ENCODE measurements at regions of chr1 and their contacts with region 1.

Region 1: DNA sequence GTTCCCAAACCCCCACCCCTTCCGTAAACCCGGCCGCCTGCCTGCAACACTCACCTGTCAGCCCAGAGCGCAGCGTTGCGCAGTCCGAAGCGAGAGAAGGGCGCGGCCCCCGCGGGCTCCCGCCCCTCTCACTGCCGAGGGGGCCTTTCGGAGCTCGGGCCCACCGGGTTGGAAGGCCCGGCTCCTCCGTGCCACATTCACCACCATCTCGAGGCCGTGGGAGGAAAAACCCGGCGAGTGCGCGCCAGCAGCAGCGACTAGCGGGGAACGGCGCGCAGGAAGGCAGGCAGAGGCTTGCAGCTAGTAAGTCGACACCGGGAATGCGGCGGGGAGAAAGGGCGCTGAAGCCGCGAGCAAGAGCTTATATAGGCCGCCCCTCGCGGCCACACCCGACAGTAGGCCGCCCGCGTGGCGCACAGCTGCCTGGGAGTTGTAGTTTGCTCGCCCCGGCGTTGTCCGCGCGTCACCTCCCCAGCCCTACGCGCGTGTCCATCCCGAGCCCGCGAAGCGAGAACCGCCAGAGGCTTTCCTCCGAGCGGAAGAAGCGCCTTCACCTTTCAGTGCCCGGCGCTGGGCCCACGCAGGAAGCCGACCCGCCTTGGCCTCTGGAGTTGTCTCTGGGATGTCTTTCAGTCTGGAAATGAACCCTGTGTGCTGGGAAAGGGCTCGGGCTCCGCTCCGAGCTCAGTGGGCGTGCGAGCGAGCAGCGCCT is 10.4 kb upstream of the RAB42 start:
- DNase-seq: peak; percentile 87 to 96 (median 91)
- ATAC-seq: peak; percentile 82
- H3K4me3 ChIP-seq: peak overlapping the region; percentile 88 to 91
- H3K4me3 Mint-ChIP-seq: peak overlapping the region; percentile 99
- H3K27ac ChIP-seq: peak overlapping the region; percentile 83 to 88
- H3K27ac Mint-ChIP-seq: peak overlapping the region; percentile 97
- H3K4me1 ChIP-seq: peaks cover 24% of the 10 kb centered on the region
- H3K4me1 Mint-ChIP-seq: peaks cover 37% of the 10 kb centered on the region
- H3K27me3 ChIP-seq: no peaks in the 10 kb centered on the region
- H3K27me3 Mint-ChIP-seq: no peaks in the 10 kb centered on the region
- CTCF ChIP-seq: no peak

Region 2: GRCh38 chr1:27872059-27872801 is 709.5 kb before region 1 on chr1 and contains the start of gene THEMIS2:
- CTCF ChIA-PET with region 1: no interaction called
- POLR2A ChIA-PET with region 1: no interaction called
- intact Hi-C with region 1: no loop called
- DNase-seq: peak; percentile 58 to 86 (median 81)
- ATAC-seq: peak; percentile 83
- H3K4me3 ChIP-seq: peak within 1 kb of the TSS; percentile 83 to 100
- H3K4me3 Mint-ChIP-seq: peak within 1 kb of the TSS; percentile 98
- H3K27ac ChIP-seq: peak within 1 kb of the TSS; percentile 47 to 61
- H3K27ac Mint-ChIP-seq: peak within 1 kb of the TSS; percentile 89
- H3K4me1 ChIP-seq: peaks cover 46% of the 10 kb centered on the region
- H3K4me1 Mint-ChIP-seq: peaks cover 49% of the 10 kb centered on the region
- H3K27me3 ChIP-seq: no peaks in the 10 kb centered on the region
- H3K27me3 Mint-ChIP-seq: no peaks in the 10 kb centered on the region
- CTCF ChIP-seq: no peak
- total RNA-seq, gene THEMIS2: 13.4 to 15.2 TPM

Region 3: GRCh38 chr1:28248283-28249012 is 333.2 kb before region 1 on chr1:
- CTCF ChIA-PET with region 1: interaction called, 5 read pairs
- POLR2A ChIA-PET with region 1: interaction called, 14 read pairs
- intact Hi-C with region 1: loop called (anchors 5 kb)
- DNase-seq: peak; percentile 72 to 89 (median 84)
- ATAC-seq: peak; percentile 18
- H3K4me3 ChIP-seq: peak overlapping the region in 1 of 2 experiments; percentile 28
- H3K4me3 Mint-ChIP-seq: peak overlapping the region; percentile 61
- H3K27ac ChIP-seq: peak overlapping the region; percentile 65 to 94
- H3K27ac Mint-ChIP-seq: peak overlapping the region; percentile 96
- H3K4me1 ChIP-seq: peaks cover 40% of the 10 kb centered on the region
- H3K4me1 Mint-ChIP-seq: peaks cover 44% of the 10 kb centered on the region
- H3K27me3 ChIP-seq: no peaks in the 10 kb centered on the region
- H3K27me3 Mint-ChIP-seq: no peaks in the 10 kb centered on the region
- CTCF ChIP-seq: peak; percentile 90

Region 4: DNA sequence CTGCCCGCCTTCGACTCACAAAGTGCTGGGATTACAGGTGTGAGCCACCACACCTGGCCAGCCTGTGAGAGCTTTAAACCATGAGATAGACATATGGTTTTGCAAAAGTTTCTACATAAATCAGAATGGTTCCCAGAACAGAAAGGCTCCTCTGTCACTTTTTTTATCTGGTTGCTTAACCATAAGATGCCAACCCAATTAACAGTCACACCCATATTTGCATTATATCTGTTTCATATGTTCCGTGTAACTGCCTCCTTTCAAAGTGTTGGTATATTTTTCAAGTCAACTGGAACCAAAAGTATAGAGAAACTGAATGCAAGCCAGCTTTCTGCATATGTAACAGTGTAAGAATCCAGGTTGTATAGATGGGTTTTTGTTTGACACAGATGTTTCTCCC is 99.6 kb before region 1 on chr1:
- CTCF ChIA-PET with region 1: no interaction called
- POLR2A ChIA-PET with region 1: no interaction called
- intact Hi-C with region 1: no loop called
- DNase-seq: no peak
- ATAC-seq: no peak
- H3K4me3 ChIP-seq: no peak overlapping the region
- H3K4me3 Mint-ChIP-seq: no peak overlapping the region
- H3K27ac ChIP-seq: no peak overlapping the region
- H3K27ac Mint-ChIP-seq: no peak overlapping the region
- H3K4me1 ChIP-seq: no peaks in the 10 kb centered on the region
- H3K4me1 Mint-ChIP-seq: no peaks in the 10 kb centered on the region
- H3K27me3 ChIP-seq: no peaks in the 10 kb centered on the region
- H3K27me3 Mint-ChIP-seq: no peaks in the 10 kb centered on the region
- CTCF ChIP-seq: no peak

Region 5: GRCh38 chr1:28505406-28506187 is 76.1 kb before region 1 on chr1 and contains the start of gene RCC1:
- CTCF ChIA-PET with region 1: interaction called, 4 read pairs
- POLR2A ChIA-PET with region 1: interaction called, 38 read pairs
- intact Hi-C with region 1: loop called (anchors 1 kb)
- DNase-seq: peak; percentile 89 to 99 (median 94)
- ATAC-seq: peak; percentile 91
- H3K4me3 ChIP-seq: peak within 1 kb of the TSS; percentile 82 to 88
- H3K4me3 Mint-ChIP-seq: peak within 1 kb of the TSS; percentile 95
- H3K27ac ChIP-seq: peak within 1 kb of the TSS; percentile 77 to 85
- H3K27ac Mint-ChIP-seq: peak within 1 kb of the TSS; percentile 94
- H3K4me1 ChIP-seq: peaks cover 31% of the 10 kb centered on the region
- H3K4me1 Mint-ChIP-seq: peaks cover 45% of the 10 kb centered on the region
- H3K27me3 ChIP-seq: no peaks in the 10 kb centered on the region
- H3K27me3 Mint-ChIP-seq: no peaks in the 10 kb centered on the region
- CTCF ChIP-seq: no peak
- total RNA-seq, gene RCC1: 12.5 to 14.4 TPM

Region 6: DNA sequence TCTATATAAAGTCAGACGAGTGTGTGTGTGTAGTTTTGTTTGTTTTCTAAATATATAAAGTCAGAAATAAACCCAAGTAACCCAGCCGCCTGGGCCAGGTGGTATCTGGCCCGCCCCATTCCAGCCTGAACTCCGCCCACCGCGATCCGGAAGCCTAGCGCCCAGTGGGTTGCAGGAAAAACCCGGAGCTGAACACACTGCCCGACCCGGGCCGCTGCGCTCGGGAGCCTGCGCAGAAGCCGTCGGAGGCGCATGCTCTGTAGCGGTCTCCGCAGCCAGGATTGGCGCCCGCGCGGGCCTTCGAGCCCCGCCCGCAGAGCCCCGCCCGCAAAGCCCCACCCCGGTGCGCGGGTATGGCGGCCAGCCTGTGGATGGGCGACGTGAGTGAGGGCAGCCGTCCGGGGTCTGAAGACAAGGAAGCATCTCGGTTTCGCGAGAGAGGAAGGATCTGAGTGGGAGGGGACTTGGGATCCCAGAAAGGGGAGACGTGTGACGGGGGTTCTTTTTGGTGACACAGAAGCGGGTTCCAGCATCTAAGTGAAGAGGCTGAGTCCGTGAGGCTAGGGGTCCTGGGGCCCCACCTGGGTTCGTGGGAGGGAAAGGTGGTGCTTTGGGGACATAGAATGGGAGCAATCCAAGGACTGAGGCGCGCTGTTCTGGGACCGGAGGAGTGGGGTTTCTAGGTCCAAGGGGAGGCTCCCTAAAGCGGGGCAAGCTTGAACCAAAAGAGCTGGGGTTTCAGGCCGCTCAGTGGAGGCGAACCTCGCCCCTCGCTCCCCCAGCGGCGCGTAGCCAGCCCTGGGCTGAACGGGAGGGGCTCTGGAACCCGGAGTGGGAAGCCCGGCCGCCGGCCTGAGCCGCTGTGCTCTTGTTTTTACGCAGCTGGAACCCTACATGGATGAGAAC is 28.7 kb before region 1 on chr1 and contains the start of gene TRNAU1AP:
- CTCF ChIA-PET with region 1: interaction called, 21 read pairs
- POLR2A ChIA-PET with region 1: interaction called, 72 read pairs
- intact Hi-C with region 1: loop called (anchors 1 kb)
- DNase-seq: peak; percentile 95 to 98 (median 97)
- ATAC-seq: peak; percentile 96
- H3K4me3 ChIP-seq: peak within 1 kb of the TSS; percentile 91 to 98
- H3K4me3 Mint-ChIP-seq: peak within 1 kb of the TSS; percentile 99
- H3K27ac ChIP-seq: peak within 1 kb of the TSS; percentile 77 to 86
- H3K27ac Mint-ChIP-seq: peak within 1 kb of the TSS; percentile 99
- H3K4me1 ChIP-seq: peaks cover 15% of the 10 kb centered on the region
- H3K4me1 Mint-ChIP-seq: peaks cover 24% of the 10 kb centered on the region
- H3K27me3 ChIP-seq: no peaks in the 10 kb centered on the region
- H3K27me3 Mint-ChIP-seq: no peaks in the 10 kb centered on the region
- CTCF ChIP-seq: no peak
- total RNA-seq, gene TRNAU1AP: 20.5 to 25.7 TPM

Region 7: GRCh38 chr1:28642847-28643635 is 61.3 kb after region 1 on chr1 and contains the start of gene TAF12:
- CTCF ChIA-PET with region 1: interaction called, 11 read pairs
- POLR2A ChIA-PET with region 1: interaction called, 33 read pairs
- intact Hi-C with region 1: loop called (anchors 1 kb)
- DNase-seq: peak; percentile 87 to 98 (median 91)
- ATAC-seq: peak; percentile 79
- H3K4me3 ChIP-seq: peak within 1 kb of the TSS; percentile 62 to 92
- H3K4me3 Mint-ChIP-seq: peak within 1 kb of the TSS; percentile 100
- H3K27ac ChIP-seq: peak within 1 kb of the TSS; percentile 88 to 90
- H3K27ac Mint-ChIP-seq: peak within 1 kb of the TSS; percentile 99
- H3K4me1 ChIP-seq: peaks cover 34% of the 10 kb centered on the region
- H3K4me1 Mint-ChIP-seq: peaks cover 54% of the 10 kb centered on the region
- H3K27me3 ChIP-seq: no peaks in the 10 kb centered on the region
- H3K27me3 Mint-ChIP-seq: no peaks in the 10 kb centered on the region
- CTCF ChIP-seq: peak; percentile 32
- total RNA-seq, gene TAF12: 7.7 to 8.5 TPM

Region 8: GRCh38 chr1:28926629-28927265 is 345.1 kb after region 1 on chr1:
- CTCF ChIA-PET with region 1: no interaction called
- POLR2A ChIA-PET with region 1: no interaction called
- intact Hi-C with region 1: loop called in 1 of 2 experiments (anchors 5 kb)
- DNase-seq: peak in 6 of 9 experiments; percentile 21 to 91 (median 42)
- ATAC-seq: peak; percentile 78
- H3K4me3 ChIP-seq: peak overlapping the region; percentile 22 to 29
- H3K4me3 Mint-ChIP-seq: peak overlapping the region; percentile 53
- H3K27ac ChIP-seq: peak overlapping the region; percentile 36 to 82
- H3K27ac Mint-ChIP-seq: peak overlapping the region; percentile 87
- H3K4me1 ChIP-seq: peaks cover 71% of the 10 kb centered on the region
- H3K4me1 Mint-ChIP-seq: peaks cover 74% of the 10 kb centered on the region
- H3K27me3 ChIP-seq: no peaks in the 10 kb centered on the region
- H3K27me3 Mint-ChIP-seq: no peaks in the 10 kb centered on the region
- CTCF ChIP-seq: no peak